Body of pancreas (tissue), 4 donors: ENCODE measurements at regions of chr13 and their contacts with region 1.

Region 1: GRCh38 chr13:23348262-23349127 is 85.0 kb downstream of the SACS start:
- DNase-seq: no peak
- ATAC-seq: no peak
- H3K4me3 ChIP-seq: no peak overlapping the region
- H3K27ac ChIP-seq: no peak overlapping the region
- H3K4me1 ChIP-seq: peaks cover 10% of the 10 kb centered on the region
- H3K27me3 ChIP-seq: no peaks in the 10 kb centered on the region
- CTCF ChIP-seq: no peak
- POLR2A ChIP-seq: no peak

Region 2: GRCh38 chr13:23042181-23042580 is 306.3 kb before region 1 on chr13:
- intact Hi-C with region 1: no loop called
- DNase-seq: no peak
- ATAC-seq: no peak
- H3K4me3 ChIP-seq: no peak overlapping the region
- H3K27ac ChIP-seq: no peak overlapping the region
- H3K4me1 ChIP-seq: no peaks in the 10 kb centered on the region
- H3K27me3 ChIP-seq: no peaks in the 10 kb centered on the region
- CTCF ChIP-seq: no peak
- POLR2A ChIP-seq: no peak

Region 3: DNA sequence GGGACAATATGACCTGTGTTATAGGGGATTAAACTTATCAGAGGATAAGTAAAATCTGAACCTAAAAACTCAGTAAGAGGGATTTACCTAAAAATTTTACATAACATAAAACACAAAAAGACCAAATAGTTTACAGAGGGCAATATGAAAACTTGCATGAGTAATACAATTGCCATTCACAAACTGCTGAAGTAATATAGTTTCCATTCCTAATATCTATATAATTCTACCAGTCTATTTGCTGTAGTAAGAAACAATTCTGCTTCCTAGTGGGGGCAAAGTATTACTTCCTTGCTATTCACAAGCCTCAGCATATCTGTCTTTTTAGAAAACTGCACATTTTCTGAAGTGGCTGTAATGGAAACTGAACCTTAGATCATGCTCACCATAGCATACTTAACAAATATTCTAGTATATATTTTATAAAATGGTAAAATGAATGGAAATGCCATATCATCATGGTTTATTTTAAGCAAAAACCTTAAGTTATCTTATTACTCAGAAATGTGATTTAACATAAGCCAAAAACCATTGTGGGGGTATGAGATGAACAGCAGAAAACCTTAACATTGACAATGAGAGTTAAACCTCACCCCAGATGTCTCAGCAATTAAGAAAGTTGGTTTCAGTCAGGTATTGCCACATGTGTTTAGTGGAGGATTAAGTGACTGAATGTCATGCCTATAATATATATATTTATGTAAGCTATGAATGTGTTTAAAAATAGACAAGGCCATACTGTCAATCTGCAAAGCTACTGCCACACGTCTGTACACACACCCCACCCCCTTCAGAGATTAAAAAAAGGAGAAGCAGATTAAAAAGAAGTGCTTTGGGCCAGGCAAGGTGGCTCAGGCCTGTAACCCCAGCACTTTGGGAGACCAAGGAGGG is 403.9 kb after region 1 on chr13:
- intact Hi-C with region 1: no loop called
- DNase-seq: no peak
- ATAC-seq: no peak
- H3K4me3 ChIP-seq: no peak overlapping the region
- H3K27ac ChIP-seq: no peak overlapping the region
- H3K4me1 ChIP-seq: no peaks in the 10 kb centered on the region
- H3K27me3 ChIP-seq: no peaks in the 10 kb centered on the region
- CTCF ChIP-seq: no peak
- POLR2A ChIP-seq: no peak

Region 4: DNA sequence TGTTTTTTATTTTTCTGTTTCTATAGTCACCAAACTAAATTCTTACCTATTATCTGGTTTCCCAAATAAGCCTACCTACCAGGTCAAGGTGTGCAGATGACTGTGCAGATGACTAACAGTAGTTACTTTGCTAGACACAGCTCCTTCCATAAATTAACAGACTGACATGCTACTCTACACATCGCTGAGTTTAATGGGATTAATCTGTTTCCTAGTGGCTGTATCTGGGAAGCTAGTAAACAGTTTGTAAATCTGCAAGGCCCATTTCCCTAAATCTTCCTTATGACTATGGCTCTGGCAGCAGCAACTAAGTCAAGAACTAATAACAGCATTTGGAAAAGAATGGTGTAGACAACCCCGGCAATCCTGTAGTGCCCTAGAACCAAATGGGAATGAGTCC is 512.8 kb after region 1 on chr13:
- intact Hi-C with region 1: loop called (anchors 5 kb)
- DNase-seq: no peak
- ATAC-seq: no peak
- H3K4me3 ChIP-seq: no peak overlapping the region
- H3K27ac ChIP-seq: no peak overlapping the region
- H3K4me1 ChIP-seq: no peaks in the 10 kb centered on the region
- H3K27me3 ChIP-seq: peaks cover 0 to 4% of the 10 kb centered on the region in 2 donors
- CTCF ChIP-seq: no peak
- POLR2A ChIP-seq: no peak